HepG2 (cell line): ENCODE measurements at regions of chr5 and their contacts with region 1.

Region 1: GRCh38 chr5:34898258-34898895 is 16.9 kb downstream of the RAD1 start:
- DNase-seq: peak; percentile 56
- ATAC-seq: peak; percentile 95
- H3K4me3 ChIP-seq: no peak overlapping the region
- H3K27ac ChIP-seq: no peak overlapping the region
- H3K4me1 ChIP-seq: peaks cover 6% of the 10 kb centered on the region
- H3K27me3 ChIP-seq: no peaks in the 10 kb centered on the region
- CTCF ChIP-seq: peak; percentile 88
- EP300 ChIP-seq: no peak
- POLR2A ChIP-seq: no peak
- RAD21 ChIP-seq: peak; percentile 88

Region 2: DNA sequence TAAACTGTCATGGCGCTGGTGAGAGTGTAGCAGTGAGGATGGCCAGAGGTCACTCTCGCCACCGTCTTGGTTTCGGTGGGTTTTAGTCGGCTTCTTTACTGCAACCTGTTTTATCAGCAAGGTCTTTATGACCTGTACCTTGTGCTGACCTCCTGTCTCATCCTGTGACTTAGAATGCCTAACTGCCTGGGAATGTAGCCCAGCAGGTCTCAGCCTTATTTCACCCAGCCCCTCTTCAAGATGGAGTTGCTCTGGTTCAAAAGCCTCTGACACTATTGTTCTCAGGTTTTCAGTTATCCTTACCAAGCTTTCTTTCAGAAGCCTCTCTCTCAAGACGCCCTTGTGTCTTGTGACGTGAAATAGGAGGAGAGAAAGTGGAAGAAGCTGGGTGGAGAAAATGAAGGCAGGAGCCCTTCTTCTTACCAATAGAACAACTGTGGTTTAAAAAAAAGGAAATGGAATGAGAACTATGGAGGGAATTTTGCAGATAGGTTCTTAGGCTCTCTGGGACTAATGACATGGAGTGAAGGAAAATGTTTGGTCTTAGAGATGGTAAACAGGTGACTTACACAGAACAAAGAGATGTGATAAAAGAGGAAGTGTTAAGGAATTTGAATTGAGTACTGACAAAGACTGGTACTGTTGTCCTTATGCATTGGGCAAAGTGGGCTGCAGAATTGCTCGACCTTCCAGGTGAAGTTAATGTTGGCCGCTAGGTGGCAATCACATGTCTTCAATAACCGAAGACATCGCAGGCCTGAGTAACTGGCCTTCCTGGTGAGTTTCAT is 375.6 kb before region 1 on chr5:
- CTCF ChIA-PET with region 1: interaction called, 10 read pairs
- POLR2A ChIA-PET with region 1: no interaction called
- in situ Hi-C with region 1: no loop called
- intact Hi-C with region 1: loop called (anchors 1 kb)
- DNase-seq: peak; percentile 65
- ATAC-seq: peak; percentile 85
- H3K4me3 ChIP-seq: no peak overlapping the region
- H3K27ac ChIP-seq: no peak overlapping the region
- H3K4me1 ChIP-seq: peaks cover 21% of the 10 kb centered on the region
- H3K27me3 ChIP-seq: no peaks in the 10 kb centered on the region
- CTCF ChIP-seq: peak; percentile 87
- EP300 ChIP-seq: no peak
- POLR2A ChIP-seq: no peak
- RAD21 ChIP-seq: peak; percentile 65; the same call in 1 of the 2 replicates

Region 3: GRCh38 chr5:34838785-34839714 is 59.3 kb before region 1 on chr5 and contains the start of gene TTC23L:
- CTCF ChIA-PET with region 1: no interaction called
- POLR2A ChIA-PET with region 1: interaction called, 4 read pairs
- in situ Hi-C with region 1: no loop called
- intact Hi-C with region 1: loop called (anchors 1 kb)
- DNase-seq: peak; percentile 96
- ATAC-seq: peak; percentile 97
- H3K4me3 ChIP-seq: peak within 1 kb of the TSS; percentile 67 to 76 (median 74)
- H3K27ac ChIP-seq: peak within 1 kb of the TSS; percentile 84
- H3K4me1 ChIP-seq: peaks cover 23% of the 10 kb centered on the region
- H3K27me3 ChIP-seq: no peaks in the 10 kb centered on the region
- CTCF ChIP-seq: peak; percentile 41
- EP300 ChIP-seq: peak; percentile 42 to 48; a peak in 3 of 4 replicates
- POLR2A ChIP-seq: peak; percentile 94 to 96
- RAD21 ChIP-seq: peak; percentile 66; the same call in 1 of the 2 replicates
- total RNA-seq, gene TTC23L: 1.1 and 1.4 TPM in 2 replicates

Region 4: DNA sequence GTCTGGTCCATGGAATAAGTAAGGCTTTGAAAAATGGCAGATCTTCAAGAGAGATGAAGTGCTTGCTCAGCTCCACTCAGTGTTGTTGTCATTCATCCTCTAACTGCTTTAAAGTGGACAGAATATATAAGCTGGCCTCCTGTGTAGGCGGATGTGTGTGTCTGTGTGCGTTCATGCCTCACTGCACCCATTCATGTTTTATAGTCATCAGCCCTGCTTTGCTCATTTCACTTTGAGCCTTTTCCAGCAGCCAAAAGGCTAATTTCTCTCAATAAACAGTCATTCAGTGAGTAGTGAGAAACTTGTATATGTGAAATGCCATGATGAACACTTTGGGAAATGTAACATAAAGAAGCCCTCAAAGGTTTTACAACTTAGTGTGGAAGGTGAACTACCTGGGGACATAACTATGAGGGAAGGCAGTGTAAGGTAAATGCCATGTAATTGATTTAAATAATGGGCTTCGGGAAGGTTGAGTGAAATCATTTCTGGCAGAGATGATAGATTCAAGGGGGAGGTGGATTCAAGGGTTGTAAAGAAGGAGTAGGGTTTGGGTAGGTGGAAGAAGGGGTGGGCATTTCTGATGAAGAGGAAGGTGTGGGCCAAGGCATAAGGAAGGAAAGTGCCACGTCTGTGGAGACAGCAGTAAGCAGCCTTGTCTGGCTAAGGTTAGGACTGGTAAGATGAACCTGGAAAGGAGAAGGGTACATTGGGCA is 43.8 kb before region 1 on chr5:
- CTCF ChIA-PET with region 1: no interaction called
- POLR2A ChIA-PET with region 1: no interaction called
- in situ Hi-C with region 1: no loop called
- intact Hi-C with region 1: no loop called
- DNase-seq: no peak
- ATAC-seq: no peak
- H3K4me3 ChIP-seq: no peak overlapping the region
- H3K27ac ChIP-seq: no peak overlapping the region
- H3K4me1 ChIP-seq: peaks cover 10% of the 10 kb centered on the region
- H3K27me3 ChIP-seq: no peaks in the 10 kb centered on the region; a peak in 1 of 5 replicates
- CTCF ChIP-seq: no peak
- EP300 ChIP-seq: no peak
- POLR2A ChIP-seq: no peak
- RAD21 ChIP-seq: no peak